Mammary epithelial cell (primary cell): ENCODE measurements at regions of chr1 and their contacts with region 1.

Region 1: GRCh38 chr1:179025125-179025974 is at the start of gene FAM20B:
- DNase-seq: peak; percentile 89
- H3K4me3 ChIP-seq: peak within 1 kb of the TSS; percentile 67 to 94 (median 71)
- H3K27ac ChIP-seq: peak within 1 kb of the TSS; percentile 77
- H3K4me1 ChIP-seq: no peaks in the 10 kb centered on the region
- H3K27me3 ChIP-seq: no peaks in the 10 kb centered on the region
- CTCF ChIP-seq: no peak
- total RNA-seq, gene FAM20B: 36.8 to 44.3 TPM

Region 2: GRCh38 chr1:178973666-178974101 is 51.7 kb before region 1 on chr1:
- CTCF ChIA-PET with region 1: no interaction called
- dilution Hi-C with region 1: no loop called
- in situ Hi-C with region 1: no loop called
- intact Hi-C with region 1: no loop called
- DNase-seq: no peak
- H3K4me3 ChIP-seq: no peak overlapping the region
- H3K27ac ChIP-seq: no peak overlapping the region
- H3K4me1 ChIP-seq: no peaks in the 10 kb centered on the region
- H3K27me3 ChIP-seq: no peaks in the 10 kb centered on the region
- CTCF ChIP-seq: no peak

Region 3: DNA sequence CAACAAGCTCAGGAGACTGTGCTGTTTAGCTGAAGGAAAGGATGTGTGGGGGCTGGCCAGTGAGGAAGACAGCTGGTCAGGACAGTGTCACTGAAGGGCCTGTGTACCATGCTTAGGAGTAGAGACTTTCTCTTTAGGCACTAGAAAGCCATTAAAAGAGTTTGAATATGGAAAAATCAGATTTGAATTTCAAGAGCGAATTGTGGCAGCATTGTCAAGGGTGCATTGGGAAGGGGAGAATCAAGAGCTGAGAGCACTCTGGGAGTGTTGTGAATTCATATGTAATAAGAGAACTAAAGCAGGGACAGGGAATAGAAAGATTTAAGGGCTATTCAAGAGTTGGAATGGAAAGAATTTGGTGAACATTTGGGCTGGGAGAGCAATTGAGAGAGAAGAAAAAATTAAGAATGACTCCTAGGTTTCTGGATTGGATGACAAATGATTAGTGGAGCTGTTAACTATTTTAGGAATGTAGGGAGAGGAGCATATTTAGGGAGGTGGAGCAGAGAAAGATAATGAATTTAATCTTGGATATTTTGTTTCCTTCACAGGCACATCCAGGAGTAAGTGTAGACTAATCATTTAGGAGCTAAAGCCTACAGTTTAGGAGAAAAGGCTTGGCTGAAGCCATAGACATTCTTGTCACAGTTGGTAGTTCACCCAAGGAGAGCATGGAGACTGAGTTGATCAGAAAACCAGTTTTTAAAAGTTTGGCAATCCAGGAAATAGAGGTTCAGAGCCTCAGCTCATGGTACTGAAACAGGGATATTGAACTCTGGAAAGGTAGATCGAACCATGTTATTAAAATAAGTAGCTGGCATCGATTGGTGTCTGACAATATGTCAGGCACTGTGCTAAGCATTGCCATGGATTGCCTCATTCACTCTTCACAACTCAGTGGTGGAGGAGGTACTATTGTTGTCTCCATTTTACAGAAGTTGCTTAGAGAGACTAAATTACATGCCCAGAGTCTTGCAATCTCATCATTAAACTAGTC is 33.4 kb after region 1 on chr1:
- CTCF ChIA-PET with region 1: no interaction called
- dilution Hi-C with region 1: no loop called
- in situ Hi-C with region 1: no loop called
- intact Hi-C with region 1: loop called (anchors 2 kb)
- DNase-seq: no peak
- H3K4me3 ChIP-seq: no peak overlapping the region
- H3K27ac ChIP-seq: peak overlapping the region; percentile 61
- H3K4me1 ChIP-seq: peaks cover 26% of the 10 kb centered on the region
- H3K27me3 ChIP-seq: no peaks in the 10 kb centered on the region
- CTCF ChIP-seq: no peak

Region 4: GRCh38 chr1:179781962-179782361 is 756.6 kb after region 1 on chr1:
- CTCF ChIA-PET with region 1: no interaction called
- dilution Hi-C with region 1: no loop called
- in situ Hi-C with region 1: no loop called
- intact Hi-C with region 1: no loop called
- DNase-seq: no peak
- H3K4me3 ChIP-seq: no peak overlapping the region
- H3K27ac ChIP-seq: no peak overlapping the region
- H3K4me1 ChIP-seq: no peaks in the 10 kb centered on the region
- H3K27me3 ChIP-seq: peaks cover 4% of the 10 kb centered on the region
- CTCF ChIP-seq: no peak